Naive thymus-derived CD4-positive, alpha-beta T cell (primary cell): ENCODE measurements at regions of chr10 and their contacts with region 1.

Region 1: GRCh38 chr10:22988581-22989360 is 60.9 kb downstream of the ARMC3 start:
- DNase-seq: peak; percentile 14 to 83 (median 77)
- ATAC-seq: peak; percentile 94
- H3K4me3 ChIP-seq: no peak overlapping the region
- H3K4me3 Mint-ChIP-seq: peak overlapping the region in 4 of 10 donors; percentile 28 to 35 (median 30)
- H3K27ac ChIP-seq: no peak overlapping the region
- H3K27ac Mint-ChIP-seq: peak overlapping the region in 4 of 9 donors; percentile 17 to 65 (median 54)
- H3K4me1 ChIP-seq: peaks cover 0 to 4% of the 10 kb centered on the region in 2 donors
- H3K4me1 Mint-ChIP-seq: peaks cover 0 to 25% (median 18%) of the 10 kb centered on the region in 7 donors
- H3K27me3 ChIP-seq: no peaks in the 10 kb centered on the region
- H3K27me3 Mint-ChIP-seq: peaks cover 0 to 22% (median under 1%) of the 10 kb centered on the region in 5 donors

Region 2: GRCh38 chr10:22010973-22011408 is 977.8 kb before region 1 on chr10:
- CTCF ChIA-PET with region 1: interaction called, 13 read pairs
- POLR2A ChIA-PET with region 1: no interaction called
- intact Hi-C with region 1: loop called (anchors 1 kb)
- DNase-seq: peak in 6 of 9 donors; percentile 21 to 52 (median 45)
- ATAC-seq: no peak
- H3K4me3 ChIP-seq: no peak overlapping the region
- H3K4me3 Mint-ChIP-seq: no peak overlapping the region
- H3K27ac ChIP-seq: no peak overlapping the region
- H3K27ac Mint-ChIP-seq: no peak overlapping the region
- H3K4me1 ChIP-seq: no peaks in the 10 kb centered on the region
- H3K4me1 Mint-ChIP-seq: peaks cover 0 to 6% (median 0%) of the 10 kb centered on the region in 7 donors
- H3K27me3 ChIP-seq: no peaks in the 10 kb centered on the region
- H3K27me3 Mint-ChIP-seq: peaks cover 0 to 23% (median 5%) of the 10 kb centered on the region in 5 donors

Region 3: GRCh38 chr10:22230158-22230833 is 758.5 kb before region 1 on chr10:
- CTCF ChIA-PET with region 1: no interaction called
- POLR2A ChIA-PET with region 1: no interaction called
- intact Hi-C with region 1: no loop called
- DNase-seq: peak in 7 of 9 donors; percentile 38 to 65 (median 52)
- ATAC-seq: peak; percentile 28
- H3K4me3 ChIP-seq: peak overlapping the region; percentile 85
- H3K4me3 Mint-ChIP-seq: peak overlapping the region; percentile 84 to 99 (median 94)
- H3K27ac ChIP-seq: peak overlapping the region; percentile 46
- H3K27ac Mint-ChIP-seq: peak overlapping the region; percentile 96 to 100 (median 99)
- H3K4me1 ChIP-seq: peaks cover 6 to 8% of the 10 kb centered on the region in 2 donors
- H3K4me1 Mint-ChIP-seq: peaks cover 11 to 27% (median 15%) of the 10 kb centered on the region in 7 donors
- H3K27me3 ChIP-seq: no peaks in the 10 kb centered on the region
- H3K27me3 Mint-ChIP-seq: peaks cover 0 to 19% (median 4%) of the 10 kb centered on the region in 5 donors

Region 4: GRCh38 chr10:22316285-22317120 is 672.3 kb before region 1 on chr10 and contains the start of gene COMMD3:
- CTCF ChIA-PET with region 1: interaction called, 3 read pairs
- POLR2A ChIA-PET with region 1: interaction called, 6 read pairs
- intact Hi-C with region 1: loop called (anchors 5 kb)
- DNase-seq: peak; percentile 71 to 85 (median 80)
- ATAC-seq: peak; percentile 84
- H3K4me3 ChIP-seq: peak within 1 kb of the TSS; percentile 73
- H3K4me3 Mint-ChIP-seq: peak within 1 kb of the TSS; percentile 85 to 99 (median 96)
- H3K27ac ChIP-seq: peak within 1 kb of the TSS; percentile 80
- H3K27ac Mint-ChIP-seq: peak within 1 kb of the TSS; percentile 87 to 99 (median 96)
- H3K4me1 ChIP-seq: peaks cover 16 to 25% of the 10 kb centered on the region in 2 donors
- H3K4me1 Mint-ChIP-seq: peaks cover 11 to 53% (median 46%) of the 10 kb centered on the region in 7 donors
- H3K27me3 ChIP-seq: peaks cover 0 to 13% of the 10 kb centered on the region in 2 donors
- H3K27me3 Mint-ChIP-seq: peaks cover 0 to 18% (median 14%) of the 10 kb centered on the region in 5 donors
- total RNA-seq, gene COMMD3: 33.9 to 83.7 (median 51.2) TPM

Region 5: DNA sequence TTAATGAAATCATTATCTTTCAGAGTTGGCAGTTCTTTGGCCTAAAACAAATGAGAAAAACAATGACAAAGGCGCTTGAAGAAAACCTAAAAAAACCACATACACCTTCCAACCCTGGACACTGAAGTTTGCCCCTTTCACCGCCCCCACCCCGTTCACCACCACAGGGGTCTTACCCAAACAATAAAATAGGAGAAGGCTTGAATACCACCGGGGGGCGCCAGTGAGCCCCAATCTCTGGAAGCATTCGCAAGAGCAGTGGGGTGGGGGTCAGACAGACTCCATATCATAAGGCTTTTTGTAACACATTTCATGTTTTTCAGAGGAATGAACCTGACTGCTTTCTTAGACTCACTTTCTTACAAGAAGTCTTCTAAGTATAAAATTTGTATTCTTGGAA is 438.0 kb before region 1 on chr10:
- CTCF ChIA-PET with region 1: interaction called, 25 read pairs
- POLR2A ChIA-PET with region 1: interaction called, 3 read pairs
- intact Hi-C with region 1: loop called (anchors 1 kb)
- DNase-seq: peak; percentile 46 to 76 (median 61)
- ATAC-seq: peak; percentile 73
- H3K4me3 ChIP-seq: no peak overlapping the region
- H3K4me3 Mint-ChIP-seq: no peak overlapping the region
- H3K27ac ChIP-seq: no peak overlapping the region
- H3K27ac Mint-ChIP-seq: peak overlapping the region in 7 of 9 donors; percentile 10 to 83 (median 61)
- H3K4me1 ChIP-seq: no peaks in the 10 kb centered on the region
- H3K4me1 Mint-ChIP-seq: peaks cover 0 to 21% (median 13%) of the 10 kb centered on the region in 7 donors
- H3K27me3 ChIP-seq: no peaks in the 10 kb centered on the region
- H3K27me3 Mint-ChIP-seq: no peaks in the 10 kb centered on the region

Region 6: GRCh38 chr10:22615819-22616499 is 372.8 kb before region 1 on chr10:
- CTCF ChIA-PET with region 1: interaction called, 5 read pairs
- POLR2A ChIA-PET with region 1: no interaction called
- intact Hi-C with region 1: loop called in 1 of 2 experiments (anchors 1 kb)
- DNase-seq: no peak
- ATAC-seq: peak; percentile 45
- H3K4me3 ChIP-seq: peak overlapping the region; percentile 38
- H3K4me3 Mint-ChIP-seq: peak overlapping the region; percentile 5 to 72 (median 26)
- H3K27ac ChIP-seq: peak overlapping the region; percentile 16
- H3K27ac Mint-ChIP-seq: peak overlapping the region; percentile 26 to 94 (median 75)
- H3K4me1 ChIP-seq: peaks cover 77 to 98% of the 10 kb centered on the region in 2 donors
- H3K4me1 Mint-ChIP-seq: peaks cover 75 to 100% (median 96%) of the 10 kb centered on the region in 7 donors
- H3K27me3 ChIP-seq: no peaks in the 10 kb centered on the region
- H3K27me3 Mint-ChIP-seq: no peaks in the 10 kb centered on the region